ENCODE measurements at regions of chr1 and their contacts with region 1.

Region 1: GRCh38 chr1:161486806-161487741 is 18.2 kb upstream of the FCGR2A start:
- DNase-seq: peak; percentile 75 to 88 (median 79)
- ATAC-seq: peak; percentile 93
- H3K4me3 ChIP-seq: peak overlapping the region; percentile 9; the same call in 1 of the 2 replicates
- H3K27ac ChIP-seq: peak overlapping the region; percentile 68
- H3K4me1 ChIP-seq: peaks cover 0 to 34% of the 10 kb centered on the region in 2 experiments
- H3K27me3 ChIP-seq: no peaks in the 10 kb centered on the region
- CTCF ChIP-seq: peak; percentile 72 to 93 (median 82)
- EP300 ChIP-seq: 0 out of 2 replicates have a peak, but pooled peaks have one; percentile 10
- POLR2A ChIP-seq: no peak
- RAD21 ChIP-seq: peak; percentile 91 to 97

Region 2: GRCh38 chr1:161631076-161631475 is 144.0 kb after region 1 on chr1 and contains the start of gene FCGR3B:
- CTCF ChIA-PET with region 1: no interaction called
- POLR2A ChIA-PET with region 1: no interaction called
- in situ Hi-C with region 1: no loop called
- intact Hi-C with region 1: loop called (anchors 10 kb)
- DNase-seq: no peak
- ATAC-seq: no peak
- H3K4me3 ChIP-seq: no peak within 1 kb of the TSS
- H3K27ac ChIP-seq: no peak within 1 kb of the TSS
- H3K4me1 ChIP-seq: peaks cover 0 to 9% of the 10 kb centered on the region in 2 experiments; a peak in 3 of 5 replicates
- H3K27me3 ChIP-seq: no peaks in the 10 kb centered on the region
- CTCF ChIP-seq: no peak
- EP300 ChIP-seq: no peak
- POLR2A ChIP-seq: no peak
- RAD21 ChIP-seq: no peak
- polyA plus RNA-seq, gene FCGR3B: 0.41 TPM

Region 3: GRCh38 chr1:161738627-161739287 is 251.7 kb after region 1 on chr1:
- CTCF ChIA-PET with region 1: interaction called, 13 read pairs
- POLR2A ChIA-PET with region 1: interaction called, 5 read pairs
- in situ Hi-C with region 1: loop called (anchors 5 kb)
- intact Hi-C with region 1: loop called (anchors 10 kb)
- DNase-seq: peak; percentile 38 to 88 (median 58)
- ATAC-seq: peak; percentile 94
- H3K4me3 ChIP-seq: no peak overlapping the region
- H3K27ac ChIP-seq: no peak overlapping the region; the same call in 2 of the 3 replicates
- H3K4me1 ChIP-seq: peaks cover 12 to 28% of the 10 kb centered on the region in 2 experiments; a peak in 4 of 5 replicates
- H3K27me3 ChIP-seq: no peaks in the 10 kb centered on the region
- CTCF ChIP-seq: peak; percentile 79 to 95 (median 88)
- EP300 ChIP-seq: peak; percentile 48; the same call in 1 of the 2 replicates
- POLR2A ChIP-seq: no peak
- RAD21 ChIP-seq: peak; percentile 94 to 95

Region 4: GRCh38 chr1:161749509-161750407 is 262.7 kb after region 1 on chr1 and contains the start of gene DUSP12:
- CTCF ChIA-PET with region 1: no interaction called
- POLR2A ChIA-PET with region 1: no interaction called
- in situ Hi-C with region 1: loop called (anchors 5 kb)
- intact Hi-C with region 1: loop called (anchors 10 kb)
- DNase-seq: peak; percentile 86 to 96 (median 90)
- ATAC-seq: peak; percentile 97
- H3K4me3 ChIP-seq: peak within 1 kb of the TSS; percentile 90
- H3K27ac ChIP-seq: peak within 1 kb of the TSS; percentile 97
- H3K4me1 ChIP-seq: peaks cover 14 to 19% of the 10 kb centered on the region in 2 experiments; a peak in 4 of 5 replicates
- H3K27me3 ChIP-seq: no peaks in the 10 kb centered on the region
- CTCF ChIP-seq: peak; percentile 30 to 43 (median 38); a peak in 4 of 6 replicates
- EP300 ChIP-seq: peak; percentile 28
- POLR2A ChIP-seq: peak; percentile 95
- RAD21 ChIP-seq: no peak
- polyA plus RNA-seq, gene DUSP12: 10.4 to 15.0 TPM

Region 5: DNA sequence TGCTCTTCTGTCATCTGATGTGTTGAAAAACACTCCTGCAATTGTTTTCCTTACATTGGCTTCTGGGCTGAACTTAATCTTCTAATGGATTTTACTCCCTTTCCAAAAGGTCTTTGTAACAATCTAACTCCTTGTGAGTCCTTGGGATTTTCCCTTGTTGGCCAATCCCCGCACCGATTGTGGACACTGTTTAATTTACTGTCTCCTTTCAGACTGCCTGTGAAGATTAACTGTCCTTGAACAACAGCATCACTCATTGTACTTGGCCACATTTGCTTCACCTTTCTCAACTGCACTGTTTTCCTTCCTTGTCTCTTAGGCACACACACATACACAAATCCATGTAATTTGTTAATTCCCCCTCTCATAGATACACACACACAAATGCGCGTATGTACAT is 769.2 kb after region 1 on chr1:
- CTCF ChIA-PET with region 1: no interaction called
- POLR2A ChIA-PET with region 1: no interaction called
- in situ Hi-C with region 1: no loop called
- intact Hi-C with region 1: no loop called
- DNase-seq: no peak
- ATAC-seq: no peak
- H3K4me3 ChIP-seq: no peak overlapping the region
- H3K27ac ChIP-seq: no peak overlapping the region
- H3K4me1 ChIP-seq: no peaks in the 10 kb centered on the region
- H3K27me3 ChIP-seq: peaks cover 3 to 4% of the 10 kb centered on the region in 2 experiments; a peak in 3 of 5 replicates
- CTCF ChIP-seq: no peak
- EP300 ChIP-seq: no peak
- POLR2A ChIP-seq: no peak
- RAD21 ChIP-seq: no peak

Measured in K562 (cell line).